KBM-7 (cell line): ENCODE measurements at regions of chr5 and their contacts with region 1.

Region 1: GRCh38 chr5:95664204-95664786 is 17.7 kb downstream of the RFESD start:
- DNase-seq: peak; percentile 64

Region 2: DNA sequence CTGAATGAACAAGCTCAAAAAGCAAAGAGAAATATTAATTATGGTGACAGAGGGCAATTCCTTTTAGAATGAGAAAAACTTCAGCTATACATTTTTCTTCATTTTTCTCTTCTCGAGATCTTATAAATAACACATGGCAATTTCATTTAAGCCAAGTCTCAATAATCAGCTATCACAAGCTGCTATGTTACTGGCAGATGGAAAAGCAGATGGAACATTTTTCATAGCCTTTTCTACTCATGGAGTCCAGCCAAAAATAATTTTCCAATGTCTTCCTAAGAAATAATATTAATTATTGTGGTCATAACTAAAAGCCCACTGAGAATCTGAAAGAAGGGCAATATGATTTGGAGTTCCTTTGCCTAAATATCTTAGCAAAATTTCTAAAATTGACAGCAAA is 145.1 kb before region 1 on chr5:
- in situ Hi-C with region 1: no loop called
- DNase-seq: no peak

Region 3: GRCh38 chr5:95846554-95847260 is 182.4 kb after region 1 on chr5:
- in situ Hi-C with region 1: loop called (anchors 25 kb)
- DNase-seq: peak; percentile 75